ENCODE measurements at regions of chr1 and their contacts with region 1.

Region 1: GRCh38 chr1:153734396-153735089 is 6.7 kb downstream of the INTS3 start:
- DNase-seq: no peak
- ATAC-seq: no peak

Region 2: DNA sequence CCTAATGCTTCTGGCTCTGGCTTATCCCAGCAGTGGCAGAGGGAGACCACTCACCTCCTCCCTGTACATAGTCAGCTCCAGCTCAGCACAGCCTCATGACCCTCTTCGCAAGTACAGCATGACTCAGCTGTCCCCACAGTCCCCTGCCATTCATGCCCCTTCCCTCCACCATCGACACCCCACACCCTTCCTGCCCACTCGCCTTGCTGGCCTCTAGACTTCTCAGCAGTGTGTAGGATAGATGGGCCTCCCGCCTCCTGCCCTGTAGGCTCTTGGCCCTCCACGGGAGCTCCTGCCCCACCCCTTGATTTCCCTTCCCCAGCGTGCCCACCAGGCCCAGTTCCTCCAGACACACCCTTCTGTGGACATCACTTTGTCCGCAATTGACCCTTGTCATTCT is 46.3 kb before region 1 on chr1:
- intact Hi-C with region 1: loop called in 1 of 2 experiments (anchors 5 kb)
- DNase-seq: no peak
- ATAC-seq: no peak